Heart right ventricle (tissue), 16 donors: ENCODE measurements at regions of chr2 and their contacts with region 1.

Region 1: GRCh38 chr2:228167290-228167689 is 14.2 kb downstream of the SPHKAP start:
- DNase-seq: no peak
- ATAC-seq: no peak
- H3K4me3 ChIP-seq: no peak overlapping the region
- H3K27ac ChIP-seq: no peak overlapping the region
- H3K4me1 ChIP-seq: peaks cover 0 to 14% (median 0%) of the 10 kb centered on the region in 9 donors
- H3K27me3 ChIP-seq: no peaks in the 10 kb centered on the region
- CTCF ChIP-seq: no peak

Region 2: DNA sequence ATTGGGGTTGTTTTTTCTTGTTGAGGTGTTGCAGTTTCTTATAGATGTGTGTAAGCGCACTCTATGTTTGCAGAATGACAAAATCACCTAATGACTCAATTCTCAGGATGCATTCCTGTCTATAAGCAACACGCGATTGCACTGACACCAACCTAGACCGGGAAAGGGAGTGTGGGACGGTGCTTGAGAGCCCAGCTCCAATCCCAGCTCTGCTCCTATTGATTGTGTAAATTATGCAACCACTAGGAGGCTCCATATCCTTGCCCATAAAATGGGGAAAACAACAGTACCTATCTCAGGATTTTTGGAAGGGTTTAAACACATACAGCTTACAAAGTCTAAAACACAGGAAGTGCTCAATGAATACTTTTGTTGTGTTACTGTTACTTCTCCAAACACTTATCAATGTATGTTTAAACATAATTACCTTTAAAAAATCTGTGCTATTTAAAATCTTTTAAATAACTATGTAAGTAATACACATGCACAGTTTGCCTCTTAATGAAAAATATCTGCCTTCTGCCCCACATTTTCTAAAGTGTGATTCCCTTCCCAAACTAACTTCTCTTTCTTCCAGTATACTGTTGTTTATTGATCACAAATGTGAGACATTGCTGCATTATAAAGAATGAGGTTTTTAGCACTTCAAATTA is 118.3 kb before region 1 on chr2:
- intact Hi-C with region 1: loop called in 3 of 10 experiments (anchors 5 to 10 kb)
- DNase-seq: peak in 1 of 2 donors; percentile 7
- ATAC-seq: peak; percentile 63 to 89 (median 82)
- H3K4me3 ChIP-seq: no peak overlapping the region
- H3K27ac ChIP-seq: peak overlapping the region in 1 of 10 donors; percentile 12
- H3K4me1 ChIP-seq: peaks cover 0 to 6% (median 0%) of the 10 kb centered on the region in 9 donors
- H3K27me3 ChIP-seq: no peaks in the 10 kb centered on the region
- CTCF ChIP-seq: peak; percentile 21 to 68 (median 47)

Region 3: DNA sequence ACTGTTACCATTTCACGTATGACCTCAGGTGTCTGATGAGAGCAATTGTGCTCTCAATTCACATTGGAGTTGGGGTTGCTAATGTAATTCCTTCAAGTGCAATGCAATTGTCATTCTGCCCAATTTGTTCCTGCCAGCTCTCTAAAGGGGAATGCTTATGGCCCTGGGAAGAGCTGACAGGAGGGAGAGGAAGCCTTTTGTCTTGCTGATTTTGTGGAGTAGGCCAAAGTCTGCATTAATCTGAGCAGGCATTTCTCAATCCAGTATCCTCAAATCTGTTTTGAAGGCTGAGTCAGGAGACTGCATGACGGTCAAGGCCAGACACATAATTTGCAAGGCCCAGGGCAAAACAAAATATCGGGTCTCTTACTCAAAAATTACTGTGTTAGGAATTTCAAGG is 340.6 kb after region 1 on chr2:
- intact Hi-C with region 1: no loop called
- DNase-seq: no peak
- ATAC-seq: no peak
- H3K4me3 ChIP-seq: no peak overlapping the region
- H3K27ac ChIP-seq: no peak overlapping the region
- H3K4me1 ChIP-seq: peaks cover 0 to 12% (median 0%) of the 10 kb centered on the region in 9 donors
- H3K27me3 ChIP-seq: no peaks in the 10 kb centered on the region
- CTCF ChIP-seq: no peak